ENCODE measurements at regions of chr4 and their contacts with region 1.

Region 1: GRCh38 chr4:37603070-37603468 is 83.1 kb downstream of the RELL1 start:
- DNase-seq: peak; percentile 60 to 64
- ATAC-seq: peak; percentile 95 to 96
- H3K4me3 ChIP-seq: no peak overlapping the region
- H3K27ac ChIP-seq: peak overlapping the region; percentile 25 to 71; a peak in 2 of 6 replicates
- H3K4me1 ChIP-seq: peaks cover 10% of the 10 kb centered on the region; the same call in 1 of the 3 replicates
- CTCF ChIP-seq: peak; percentile 81
- EP300 ChIP-seq: no peak
- POLR2A ChIP-seq: no peak
- RAD21 ChIP-seq: peak; percentile 91 to 93

Region 2: DNA sequence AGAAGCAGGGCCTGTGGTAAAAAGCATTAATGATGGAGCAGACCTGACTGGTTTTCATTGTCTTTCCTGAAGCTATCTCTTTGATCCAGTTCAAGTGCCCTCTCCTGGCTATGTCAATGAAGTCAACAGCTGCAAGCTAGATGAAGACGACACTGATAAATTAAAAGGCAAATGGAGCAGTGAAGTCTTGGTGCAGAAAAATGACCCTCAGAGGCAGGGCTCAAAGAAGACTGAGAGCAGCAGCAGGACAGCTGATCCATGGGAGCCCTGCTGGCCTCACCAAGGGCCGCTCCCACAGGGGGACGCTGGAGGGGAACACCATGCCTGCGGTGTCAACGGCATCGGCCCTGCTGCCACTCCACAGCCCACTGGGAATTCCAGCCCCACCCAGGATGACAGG is 13.1 kb before region 1 on chr4:
- CTCF ChIA-PET with region 1: interaction called, 16 read pairs
- POLR2A ChIA-PET with region 1: no interaction called
- DNase-seq: no peak
- ATAC-seq: no peak
- H3K4me3 ChIP-seq: no peak overlapping the region
- H3K27ac ChIP-seq: no peak overlapping the region
- H3K4me1 ChIP-seq: no peaks in the 10 kb centered on the region
- CTCF ChIP-seq: no peak
- EP300 ChIP-seq: no peak
- POLR2A ChIP-seq: no peak
- RAD21 ChIP-seq: no peak

Region 3: DNA sequence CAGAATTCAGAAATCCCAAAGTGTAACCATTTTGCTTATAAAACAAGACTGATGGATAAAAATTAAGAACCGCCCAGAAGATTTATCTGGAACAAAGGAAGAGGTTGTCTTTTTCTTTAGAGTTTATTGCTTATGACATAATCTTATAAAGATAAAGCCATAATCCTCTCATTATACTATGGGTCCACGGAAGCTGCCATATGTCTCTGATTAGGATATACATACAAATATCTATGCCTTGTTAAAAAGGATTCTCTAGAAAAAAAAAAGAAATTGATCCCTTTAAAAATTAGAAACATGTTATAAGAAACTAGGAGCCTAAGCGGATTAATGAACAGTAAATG is 12.6 kb after region 1 on chr4:
- CTCF ChIA-PET with region 1: interaction called, 13 read pairs
- POLR2A ChIA-PET with region 1: no interaction called
- DNase-seq: no peak
- ATAC-seq: no peak
- H3K4me3 ChIP-seq: no peak overlapping the region
- H3K27ac ChIP-seq: no peak overlapping the region
- H3K4me1 ChIP-seq: no peaks in the 10 kb centered on the region
- CTCF ChIP-seq: no peak
- EP300 ChIP-seq: no peak
- POLR2A ChIP-seq: no peak
- RAD21 ChIP-seq: no peak

Region 4: GRCh38 chr4:37628977-37629609 is 26.0 kb after region 1 on chr4:
- CTCF ChIA-PET with region 1: interaction called, 11 read pairs
- POLR2A ChIA-PET with region 1: no interaction called
- DNase-seq: peak; percentile 50 to 63
- ATAC-seq: peak; percentile 90 to 93
- H3K4me3 ChIP-seq: no peak overlapping the region
- H3K27ac ChIP-seq: peak overlapping the region in 1 of 2 experiments; percentile 56; a peak in 3 of 6 replicates
- H3K4me1 ChIP-seq: peaks cover 14% of the 10 kb centered on the region
- CTCF ChIP-seq: no peak
- EP300 ChIP-seq: no peak
- POLR2A ChIP-seq: no peak
- RAD21 ChIP-seq: no peak

Region 5: DNA sequence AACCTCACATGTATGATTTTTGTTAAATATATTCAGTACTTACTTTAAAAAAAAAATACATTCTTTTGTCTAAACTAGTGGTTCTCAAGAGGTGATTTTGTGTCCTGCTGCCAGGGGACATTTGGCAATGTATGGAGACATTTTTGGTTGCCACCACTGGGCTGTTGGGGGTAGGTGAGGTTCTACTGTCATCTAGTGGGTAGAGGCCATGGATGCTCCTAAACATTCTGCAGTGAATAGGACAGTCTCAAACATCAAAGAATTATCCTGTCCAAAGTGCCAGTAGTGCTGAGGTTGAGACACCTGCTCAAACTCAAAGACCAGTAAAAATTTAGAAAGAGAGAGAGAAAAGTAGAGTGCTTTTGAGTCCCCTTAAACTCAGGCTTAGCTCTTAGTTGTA is 190.5 kb after region 1 on chr4:
- CTCF ChIA-PET with region 1: interaction called, 40 read pairs
- POLR2A ChIA-PET with region 1: no interaction called
- DNase-seq: peak in 1 of 2 experiments; percentile 17
- ATAC-seq: peak in 1 of 2 experiments; percentile 47; a peak in 2 of 6 replicates
- H3K4me3 ChIP-seq: no peak overlapping the region
- H3K27ac ChIP-seq: no peak overlapping the region
- H3K4me1 ChIP-seq: no peaks in the 10 kb centered on the region
- CTCF ChIP-seq: no peak; the same call in 2 of the 3 replicates
- EP300 ChIP-seq: no peak
- POLR2A ChIP-seq: no peak
- RAD21 ChIP-seq: peak; percentile 51 to 54; a peak in 4 of 5 replicates

Region 6: GRCh38 chr4:37802068-37802666 is 199.1 kb after region 1 on chr4:
- CTCF ChIA-PET with region 1: interaction called, 50 read pairs
- POLR2A ChIA-PET with region 1: interaction called, 4 read pairs
- DNase-seq: peak; percentile 27 to 79
- ATAC-seq: peak; percentile 94 to 99
- H3K4me3 ChIP-seq: no peak overlapping the region
- H3K27ac ChIP-seq: no peak overlapping the region
- H3K4me1 ChIP-seq: no peaks in the 10 kb centered on the region
- CTCF ChIP-seq: peak; percentile 67
- EP300 ChIP-seq: no peak
- POLR2A ChIP-seq: no peak
- RAD21 ChIP-seq: peak; percentile 72 to 77

Measured in A549 (cell line).